CD8-positive, alpha-beta T cell (primary cell): ENCODE measurements at regions of chr12 and their contacts with region 1.

Region 1: DNA sequence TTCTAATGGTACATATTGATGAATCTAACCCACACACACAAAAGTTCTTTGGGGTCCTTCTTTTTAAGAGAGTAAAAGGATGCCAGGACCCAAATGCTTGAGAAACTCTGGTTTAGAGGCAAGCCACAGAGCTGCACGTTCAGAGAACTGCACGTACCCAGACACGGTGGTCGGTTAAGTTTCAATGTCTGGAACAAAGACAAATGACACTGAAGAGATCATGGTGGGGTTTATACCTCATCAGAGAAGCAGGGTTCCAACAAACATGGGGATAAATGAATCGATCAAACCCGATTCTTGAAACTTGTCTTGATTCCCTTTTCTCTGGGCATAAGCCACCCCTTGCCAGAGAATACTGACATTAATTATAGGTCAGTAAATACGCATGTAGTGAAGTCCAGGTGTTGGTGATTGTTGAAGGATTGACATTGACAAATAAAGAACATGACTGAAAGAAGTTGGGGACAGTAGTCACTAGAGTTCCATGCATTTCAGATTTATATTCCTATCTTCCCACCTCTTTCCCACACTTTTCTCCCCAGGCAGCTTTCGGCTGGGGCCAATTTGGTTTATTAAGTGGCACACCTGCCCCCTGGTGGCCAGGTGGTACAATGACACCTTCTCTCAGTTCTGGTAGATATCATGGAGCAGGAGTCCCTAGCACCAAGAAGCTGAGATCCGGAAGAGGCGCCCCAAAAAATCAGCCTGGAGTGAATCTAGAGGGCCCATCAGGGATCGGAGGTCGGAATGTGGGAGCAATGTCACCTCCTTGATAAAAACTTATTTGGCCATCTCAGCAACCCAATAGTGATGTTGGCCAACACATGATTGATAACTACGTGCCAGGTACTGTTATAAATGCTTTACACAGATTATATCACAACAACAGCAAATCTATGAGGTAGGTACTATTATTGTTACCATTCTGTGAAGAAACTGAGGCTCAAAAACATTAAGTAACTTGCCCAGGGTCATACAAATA is 17.8 kb upstream of the HDAC7 start:
- DNase-seq: peak; percentile 28 to 84 (median 70)
- ATAC-seq: peak; percentile 46
- H3K4me3 ChIP-seq: no peak overlapping the region
- H3K4me3 Mint-ChIP-seq: no peak overlapping the region
- H3K27ac ChIP-seq: no peak overlapping the region
- H3K27ac Mint-ChIP-seq: peak overlapping the region; percentile 65
- H3K4me1 ChIP-seq: peaks cover 51% of the 10 kb centered on the region
- H3K4me1 Mint-ChIP-seq: peaks cover 54% of the 10 kb centered on the region
- H3K27me3 ChIP-seq: no peaks in the 10 kb centered on the region
- H3K27me3 Mint-ChIP-seq: no peaks in the 10 kb centered on the region
- CTCF ChIP-seq: peak; percentile 86

Region 2: GRCh38 chr12:47651368-47652254 is 185.9 kb before region 1 on chr12:
- CTCF ChIA-PET with region 1: interaction called, 7 read pairs
- POLR2A ChIA-PET with region 1: no interaction called
- intact Hi-C with region 1: loop called in 1 of 2 experiments (anchors 2 kb)
- DNase-seq: peak in 7 of 9 experiments; percentile 29 to 73 (median 42)
- ATAC-seq: peak; percentile 96
- H3K4me3 ChIP-seq: no peak overlapping the region
- H3K4me3 Mint-ChIP-seq: peak overlapping the region; percentile 64
- H3K27ac ChIP-seq: no peak overlapping the region
- H3K27ac Mint-ChIP-seq: peak overlapping the region; percentile 19
- H3K4me1 ChIP-seq: peaks cover 9% of the 10 kb centered on the region
- H3K4me1 Mint-ChIP-seq: peaks cover 16% of the 10 kb centered on the region
- H3K27me3 ChIP-seq: no peaks in the 10 kb centered on the region
- H3K27me3 Mint-ChIP-seq: no peaks in the 10 kb centered on the region
- CTCF ChIP-seq: peak; percentile 90

Region 3: DNA sequence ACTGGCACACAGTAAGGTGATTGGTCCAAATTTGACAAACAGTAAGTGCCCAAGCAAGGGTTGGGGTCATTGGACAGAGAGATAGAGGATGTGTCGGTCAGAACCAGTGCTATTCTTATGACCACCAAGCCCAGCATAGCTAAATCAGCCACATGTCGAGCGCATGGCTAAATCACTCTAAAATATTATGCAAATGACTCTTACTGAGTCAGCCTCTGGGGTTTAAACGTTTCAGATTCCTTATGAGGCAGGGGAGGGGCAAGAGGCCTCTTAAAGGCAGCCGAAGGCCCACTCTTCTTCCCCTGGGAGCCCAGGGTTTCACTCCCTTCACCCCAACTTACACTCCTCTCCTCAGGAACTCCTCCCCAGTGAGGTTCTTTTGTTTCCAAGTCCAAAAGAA is 111.6 kb before region 1 on chr12:
- CTCF ChIA-PET with region 1: interaction called, 18 read pairs
- POLR2A ChIA-PET with region 1: no interaction called
- intact Hi-C with region 1: no loop called
- DNase-seq: no peak
- ATAC-seq: no peak
- H3K4me3 ChIP-seq: no peak overlapping the region
- H3K4me3 Mint-ChIP-seq: no peak overlapping the region
- H3K27ac ChIP-seq: no peak overlapping the region
- H3K27ac Mint-ChIP-seq: no peak overlapping the region
- H3K4me1 ChIP-seq: peaks cover 15% of the 10 kb centered on the region
- H3K4me1 Mint-ChIP-seq: peaks cover 16% of the 10 kb centered on the region
- H3K27me3 ChIP-seq: peaks cover 0 to 5% of the 10 kb centered on the region in 2 experiments
- H3K27me3 Mint-ChIP-seq: no peaks in the 10 kb centered on the region
- CTCF ChIP-seq: no peak

Region 4: GRCh38 chr12:47797441-47797840 is 40.0 kb before region 1 on chr12:
- CTCF ChIA-PET with region 1: interaction called, 728 read pairs
- POLR2A ChIA-PET with region 1: interaction called, 12 read pairs
- intact Hi-C with region 1: loop called (anchors 1 kb)
- DNase-seq: peak in 6 of 9 experiments; percentile 47 to 73 (median 64)
- ATAC-seq: peak; percentile 90
- H3K4me3 ChIP-seq: no peak overlapping the region
- H3K4me3 Mint-ChIP-seq: no peak overlapping the region
- H3K27ac ChIP-seq: no peak overlapping the region
- H3K27ac Mint-ChIP-seq: peak overlapping the region; percentile 85
- H3K4me1 ChIP-seq: peaks cover 44% of the 10 kb centered on the region
- H3K4me1 Mint-ChIP-seq: peaks cover 36% of the 10 kb centered on the region
- H3K27me3 ChIP-seq: no peaks in the 10 kb centered on the region
- H3K27me3 Mint-ChIP-seq: no peaks in the 10 kb centered on the region
- CTCF ChIP-seq: peak; percentile 35

Region 5: DNA sequence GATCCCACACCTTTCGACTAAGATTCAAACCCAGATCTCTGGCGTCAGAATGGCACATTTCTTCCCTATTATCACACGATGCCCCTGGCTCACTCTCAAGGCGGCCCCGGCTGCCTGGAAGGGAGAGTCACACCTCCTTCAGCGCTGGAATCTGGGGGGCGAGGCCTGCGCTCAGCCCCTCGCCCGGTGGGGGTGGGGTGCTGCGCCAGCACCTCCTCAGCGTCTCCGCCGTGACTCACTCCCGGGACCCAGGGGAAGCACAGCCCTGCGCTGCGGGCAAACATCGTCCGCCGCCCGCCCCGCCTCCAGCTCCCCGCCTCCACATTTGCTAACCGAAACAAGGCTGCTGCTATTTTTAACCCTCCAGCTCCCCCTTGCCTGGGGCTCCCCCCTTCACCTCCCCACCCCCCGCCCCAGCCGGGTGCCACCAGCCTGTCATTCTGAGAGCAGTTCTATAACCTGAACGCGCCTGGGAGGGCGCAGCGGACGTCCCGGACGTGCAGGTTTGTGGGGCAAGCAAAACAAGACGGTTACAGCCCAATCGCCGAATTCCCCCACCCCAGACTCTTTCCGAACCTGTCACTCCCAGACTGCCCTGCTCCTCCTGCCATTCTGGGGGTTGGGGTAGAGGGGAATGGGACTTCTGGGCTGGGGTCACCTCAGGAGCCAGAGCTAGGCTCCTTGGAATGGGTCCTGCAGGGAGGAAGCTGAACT is 24.5 kb before region 1 on chr12:
- CTCF ChIA-PET with region 1: interaction called, 728 read pairs
- POLR2A ChIA-PET with region 1: interaction called, 87 read pairs
- intact Hi-C with region 1: loop called (anchors 1 kb)
- DNase-seq: peak; percentile 77 to 95 (median 92)
- ATAC-seq: peak; percentile 73
- H3K4me3 ChIP-seq: peak overlapping the region; percentile 44 to 59
- H3K4me3 Mint-ChIP-seq: peak overlapping the region; percentile 82
- H3K27ac ChIP-seq: peak overlapping the region; percentile 65 to 73
- H3K27ac Mint-ChIP-seq: peak overlapping the region; percentile 97
- H3K4me1 ChIP-seq: peaks cover 95% of the 10 kb centered on the region
- H3K4me1 Mint-ChIP-seq: peaks cover 93% of the 10 kb centered on the region
- H3K27me3 ChIP-seq: no peaks in the 10 kb centered on the region
- H3K27me3 Mint-ChIP-seq: no peaks in the 10 kb centered on the region
- CTCF ChIP-seq: no peak

Region 6: DNA sequence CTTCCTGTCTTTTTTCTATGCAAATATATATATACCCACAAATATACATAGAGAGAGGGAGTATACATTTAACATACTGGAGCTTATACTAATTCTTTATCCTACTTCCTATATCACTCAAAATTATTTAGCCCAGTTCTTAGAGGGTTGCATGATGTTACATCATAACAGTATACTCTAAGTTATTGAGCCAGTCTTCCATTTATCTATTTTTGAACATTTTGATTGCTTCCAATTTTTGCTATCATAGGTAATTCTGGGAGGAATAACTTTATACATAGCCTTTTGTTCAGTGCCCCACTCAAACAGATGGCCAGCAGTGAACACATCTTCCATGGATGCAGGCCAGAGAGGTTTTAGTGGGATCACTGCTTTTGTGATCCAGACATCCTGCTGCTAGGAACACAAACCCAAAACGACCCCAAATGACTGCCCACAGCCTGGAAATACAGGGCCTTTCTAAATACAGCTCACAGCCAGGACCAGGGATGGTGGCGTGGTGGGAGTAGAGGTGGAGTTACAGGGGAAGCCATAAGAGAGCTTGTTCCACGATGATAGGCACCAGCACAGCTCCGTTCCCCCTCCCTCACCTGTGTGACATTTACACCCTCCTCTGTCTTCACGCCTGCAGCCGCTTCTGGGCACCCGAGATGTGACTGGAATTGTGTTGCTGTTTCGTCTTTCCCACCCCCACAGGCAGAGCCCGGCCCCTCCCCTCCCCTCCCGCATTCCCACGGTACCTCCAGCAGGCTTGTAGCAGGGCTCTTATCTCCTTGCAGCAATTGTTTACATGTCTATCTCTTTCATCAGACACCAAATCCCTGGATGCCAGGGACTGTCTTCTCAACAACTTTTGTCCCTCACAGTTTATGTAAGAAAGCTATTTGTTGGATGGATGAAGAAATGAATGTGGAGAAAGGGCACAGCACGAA is 12.9 kb after region 1 on chr12:
- CTCF ChIA-PET with region 1: interaction called, 42 read pairs
- POLR2A ChIA-PET with region 1: no interaction called
- intact Hi-C with region 1: no loop called
- DNase-seq: no peak
- ATAC-seq: no peak
- H3K4me3 ChIP-seq: no peak overlapping the region
- H3K4me3 Mint-ChIP-seq: no peak overlapping the region
- H3K27ac ChIP-seq: no peak overlapping the region
- H3K27ac Mint-ChIP-seq: no peak overlapping the region
- H3K4me1 ChIP-seq: no peaks in the 10 kb centered on the region
- H3K4me1 Mint-ChIP-seq: no peaks in the 10 kb centered on the region
- H3K27me3 ChIP-seq: no peaks in the 10 kb centered on the region
- H3K27me3 Mint-ChIP-seq: peaks cover 2% of the 10 kb centered on the region
- CTCF ChIP-seq: no peak